HCT116 (cell line): ENCODE measurements at regions of chr17 and their contacts with region 1.

Region 1: DNA sequence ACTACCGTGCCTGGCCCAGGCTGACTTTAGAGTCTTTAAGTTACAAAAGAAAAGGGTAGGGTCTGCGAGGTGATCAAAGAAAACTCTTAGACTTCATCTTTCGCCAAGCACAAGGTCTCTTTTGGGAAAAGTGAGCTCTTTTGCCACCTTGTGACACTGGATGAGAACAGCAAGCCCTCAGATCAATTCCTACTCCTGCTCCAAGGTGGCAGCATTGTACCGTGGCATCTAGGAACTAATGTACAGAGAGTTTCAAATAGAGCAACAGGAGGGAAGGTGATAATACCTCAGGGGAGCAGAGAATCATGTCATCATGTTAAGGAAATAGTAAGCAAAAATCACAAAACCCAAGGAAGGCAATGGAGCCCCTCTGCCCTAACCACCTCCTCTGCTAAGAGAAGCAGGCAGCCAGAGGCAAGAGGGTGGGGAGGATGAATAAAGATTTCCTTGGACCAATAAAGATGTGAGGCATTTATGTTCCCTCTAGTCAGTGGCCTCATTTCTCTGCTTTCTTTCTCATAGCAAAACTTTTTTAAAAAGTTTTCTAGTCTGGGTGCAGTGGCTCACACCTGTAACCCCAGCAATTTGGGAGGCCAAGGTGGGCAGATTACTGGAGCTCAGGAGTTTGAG is 2.1 kb upstream of the C17orf78 start:
- DNase-seq: peak; percentile 76
- ATAC-seq: peak; percentile 98
- H3K4me3 ChIP-seq: no peak overlapping the region
- H3K27ac ChIP-seq: no peak overlapping the region
- H3K4me1 ChIP-seq: peaks cover 0 to 5% of the 10 kb centered on the region in 2 experiments; a peak in 2 of 4 replicates
- H3K27me3 ChIP-seq: no peaks in the 10 kb centered on the region
- CTCF ChIP-seq: peak; percentile 99 to 100 (median 100)
- POLR2A ChIP-seq: no peak
- RAD21 ChIP-seq: peak; percentile 99

Region 2: DNA sequence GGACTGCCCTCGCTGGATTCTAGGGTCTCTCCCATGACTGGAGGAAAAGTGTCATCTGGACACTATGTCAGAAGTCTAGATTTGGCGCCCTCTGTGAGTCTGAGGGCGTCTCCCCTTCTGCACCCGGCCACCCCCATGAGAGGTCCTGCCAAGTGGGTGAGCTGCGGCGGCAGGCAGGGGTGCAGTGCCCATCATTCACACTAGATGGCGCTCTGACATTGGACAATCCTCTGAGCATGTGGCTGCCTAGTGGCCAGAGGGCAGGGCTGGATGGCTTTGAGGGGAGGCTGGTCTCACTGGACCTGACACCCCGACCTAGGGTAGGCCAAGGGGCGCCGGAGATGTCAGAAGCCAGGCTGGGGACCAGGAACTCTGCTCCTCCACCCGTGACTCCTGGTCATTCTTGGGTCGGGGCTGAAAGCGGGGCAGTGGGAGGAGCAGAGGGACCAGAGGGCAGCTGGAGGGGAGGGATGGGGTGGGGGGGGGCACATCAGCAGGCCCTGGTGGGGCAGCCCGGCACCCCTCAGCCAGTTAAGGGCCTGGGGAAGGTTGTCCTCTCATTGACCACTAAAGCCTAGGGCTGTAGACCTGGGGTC is 744.3 kb before region 1 on chr17:
- CTCF ChIA-PET with region 1: interaction called, 13 read pairs
- POLR2A ChIA-PET with region 1: no interaction called
- RAD21 ChIA-PET with region 1: no interaction called
- intact Hi-C with region 1: loop called (anchors 1 kb)
- DNase-seq: peak; percentile 54
- ATAC-seq: peak; percentile 95
- H3K4me3 ChIP-seq: no peak overlapping the region
- H3K27ac ChIP-seq: no peak overlapping the region
- H3K4me1 ChIP-seq: peaks cover 0 to 4% of the 10 kb centered on the region in 2 experiments; a peak in 2 of 4 replicates
- H3K27me3 ChIP-seq: 0 out of 2 replicates have a peak, but pooled peaks cover 4% of the 10 kb centered on the region
- CTCF ChIP-seq: peak; percentile 92 to 98 (median 98)
- POLR2A ChIP-seq: no peak
- RAD21 ChIP-seq: peak; percentile 98

Region 3: DNA sequence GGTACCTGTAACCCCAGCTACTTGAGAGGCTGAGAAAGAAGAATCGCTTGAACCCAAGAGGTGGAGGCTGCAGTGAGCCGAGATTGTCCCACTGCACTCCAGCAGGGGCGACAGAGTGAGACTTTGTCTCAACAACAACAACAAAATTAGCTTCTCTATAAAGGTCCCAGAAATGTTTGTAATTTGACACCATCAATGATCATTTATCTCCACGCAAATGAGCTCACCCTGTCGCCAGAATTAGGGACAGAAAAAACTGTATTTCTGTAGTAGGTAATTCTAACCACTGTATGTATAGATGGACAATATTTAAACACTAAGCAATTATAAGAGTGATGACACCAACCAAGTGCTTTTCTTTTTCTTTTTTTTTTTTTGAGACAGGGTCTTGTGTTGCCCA is 12.8 kb after region 1 on chr17:
- CTCF ChIA-PET with region 1: interaction called, 12 read pairs
- POLR2A ChIA-PET with region 1: interaction called, 3 read pairs
- RAD21 ChIA-PET with region 1: no interaction called
- intact Hi-C with region 1: no loop called
- DNase-seq: no peak
- ATAC-seq: no peak
- H3K4me3 ChIP-seq: no peak overlapping the region
- H3K27ac ChIP-seq: no peak overlapping the region
- H3K4me1 ChIP-seq: no peaks in the 10 kb centered on the region; a peak in 1 of 4 replicates
- H3K27me3 ChIP-seq: no peaks in the 10 kb centered on the region
- CTCF ChIP-seq: no peak
- POLR2A ChIP-seq: no peak
- RAD21 ChIP-seq: no peak

Region 4: DNA sequence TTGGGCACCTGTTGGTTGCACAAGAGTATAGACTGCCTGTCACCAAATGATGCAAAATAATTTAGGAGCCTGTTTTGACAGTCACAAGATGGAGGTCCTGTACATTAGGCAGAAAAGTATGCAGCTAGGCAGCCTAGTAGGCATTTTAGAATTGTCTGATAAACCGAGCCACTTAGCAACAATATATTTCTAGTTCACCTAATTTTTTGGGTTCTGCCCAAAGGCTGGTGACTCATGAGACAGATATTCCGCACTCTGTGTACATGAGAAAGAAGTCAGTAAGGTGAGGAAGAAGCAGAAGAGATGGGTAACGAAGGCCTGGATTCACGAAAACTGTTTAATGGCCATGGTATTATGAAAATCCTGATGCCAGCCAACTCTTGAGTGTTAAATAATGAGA is 25.8 kb after region 1 on chr17:
- CTCF ChIA-PET with region 1: interaction called, 19 read pairs
- POLR2A ChIA-PET with region 1: interaction called, 3 read pairs
- RAD21 ChIA-PET with region 1: interaction called in 1 of 2 experiments, 3 read pairs
- intact Hi-C with region 1: loop called (anchors 1 kb)
- DNase-seq: no peak
- ATAC-seq: 0 out of 2 replicates have a peak, but pooled peaks have one; percentile 35
- H3K4me3 ChIP-seq: no peak overlapping the region
- H3K27ac ChIP-seq: no peak overlapping the region
- H3K4me1 ChIP-seq: peaks cover 6 to 18% of the 10 kb centered on the region in 2 experiments
- H3K27me3 ChIP-seq: no peaks in the 10 kb centered on the region
- CTCF ChIP-seq: no peak
- POLR2A ChIP-seq: no peak
- RAD21 ChIP-seq: no peak

Region 5: DNA sequence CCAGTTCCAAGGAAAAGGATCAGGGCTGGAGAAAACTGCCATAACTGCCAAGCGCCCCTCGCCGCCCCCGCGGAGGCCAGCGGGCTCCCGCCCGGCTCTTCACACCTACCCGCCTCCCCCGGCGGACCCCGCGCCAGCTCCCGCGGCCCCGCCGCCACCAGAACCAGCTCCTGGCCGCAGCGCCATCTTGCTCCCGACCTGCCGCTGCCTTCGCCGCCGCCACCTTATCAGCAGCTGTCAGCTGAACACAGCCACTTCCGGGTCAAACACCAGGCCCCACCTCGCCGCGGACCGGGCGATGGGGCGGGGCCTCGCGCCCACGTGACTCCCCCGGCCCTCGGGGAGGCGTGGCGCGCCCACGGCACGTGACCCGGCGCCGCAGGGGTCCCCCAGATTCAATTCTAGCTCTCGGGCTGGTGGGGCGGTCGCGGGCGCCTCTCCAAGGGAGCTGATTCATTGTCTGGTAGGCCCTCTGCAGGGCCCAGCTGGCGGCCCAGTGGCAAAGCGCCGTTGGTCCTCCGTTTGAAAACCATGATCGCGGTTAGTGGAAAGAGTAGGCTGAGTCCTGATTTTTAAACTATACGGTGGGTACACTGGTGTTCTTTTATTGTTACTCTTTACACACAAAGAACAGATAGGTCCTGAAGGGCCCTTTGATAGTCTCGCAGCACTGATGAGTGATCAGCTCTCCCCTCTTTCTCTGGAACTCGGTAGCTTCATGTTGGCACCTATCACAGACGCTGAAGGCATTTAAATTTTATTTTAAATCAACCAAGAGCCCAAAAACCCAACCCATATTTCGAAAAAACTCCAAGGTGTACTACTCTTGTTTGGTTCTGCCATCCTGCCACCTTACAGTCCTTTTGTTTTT is 235.8 kb after region 1 on chr17 and contains the start of gene SYNRG:
- CTCF ChIA-PET with region 1: interaction called, 10 read pairs
- POLR2A ChIA-PET with region 1: no interaction called
- RAD21 ChIA-PET with region 1: interaction called in 1 of 2 experiments, 3 read pairs
- intact Hi-C with region 1: no loop called
- DNase-seq: peak; percentile 86
- ATAC-seq: peak; percentile 92
- H3K4me3 ChIP-seq: peak within 1 kb of the TSS; percentile 85 to 91
- H3K27ac ChIP-seq: peak within 1 kb of the TSS; percentile 75
- H3K4me1 ChIP-seq: peaks cover 15 to 26% of the 10 kb centered on the region in 2 experiments
- H3K27me3 ChIP-seq: no peaks in the 10 kb centered on the region
- CTCF ChIP-seq: peak in 2 of 3 experiments; percentile 23 to 29; a peak in 2 of 6 replicates
- POLR2A ChIP-seq: peak; percentile 80
- RAD21 ChIP-seq: peak; percentile 34
- total RNA-seq, gene SYNRG: 23.8 TPM

Region 6: GRCh38 chr17:37659925-37660324 is 286.3 kb after region 1 on chr17:
- CTCF ChIA-PET with region 1: no interaction called
- POLR2A ChIA-PET with region 1: no interaction called
- RAD21 ChIA-PET with region 1: no interaction called
- intact Hi-C with region 1: no loop called
- DNase-seq: no peak
- ATAC-seq: no peak
- H3K4me3 ChIP-seq: no peak overlapping the region
- H3K27ac ChIP-seq: no peak overlapping the region
- H3K4me1 ChIP-seq: no peaks in the 10 kb centered on the region
- H3K27me3 ChIP-seq: no peaks in the 10 kb centered on the region
- CTCF ChIP-seq: no peak
- POLR2A ChIP-seq: no peak
- RAD21 ChIP-seq: no peak

Region 7: DNA sequence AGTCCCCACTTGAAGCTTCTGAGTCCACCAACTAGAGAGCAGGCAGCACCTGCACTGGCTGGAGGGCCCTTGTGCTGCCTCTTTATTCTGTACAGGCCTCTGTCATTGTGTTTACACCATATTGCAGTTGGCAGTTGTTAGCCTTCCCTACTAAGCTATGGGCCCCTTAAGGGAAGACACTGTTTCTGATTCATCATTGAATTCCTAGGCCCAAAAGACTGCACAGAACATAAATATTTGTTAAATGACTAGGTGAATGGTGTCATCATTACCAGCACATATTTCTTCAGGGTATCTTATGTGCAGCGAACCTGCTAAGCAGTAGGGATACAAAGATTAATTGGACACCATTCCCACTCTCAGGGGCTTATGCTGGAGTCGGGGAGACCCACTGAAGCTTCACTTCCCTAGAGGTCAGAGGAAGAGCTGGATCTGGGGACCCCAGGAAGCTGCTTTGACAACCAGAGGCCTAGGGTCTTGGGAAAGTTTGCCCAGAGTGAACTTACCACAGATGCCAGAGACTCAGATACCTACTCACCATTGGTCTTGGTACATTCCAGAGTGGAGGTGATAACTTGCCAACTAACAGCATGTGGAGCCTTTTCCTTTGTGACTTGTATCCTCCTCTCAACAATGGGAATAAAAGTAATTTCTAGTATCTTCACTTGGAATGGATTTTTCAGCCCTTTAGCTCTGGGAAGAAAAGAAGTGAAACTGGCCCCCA is 298.3 kb after region 1 on chr17:
- CTCF ChIA-PET with region 1: no interaction called
- POLR2A ChIA-PET with region 1: no interaction called
- RAD21 ChIA-PET with region 1: no interaction called
- intact Hi-C with region 1: no loop called
- DNase-seq: no peak
- ATAC-seq: peak; percentile 49; the same call in 1 of the 2 replicates
- H3K4me3 ChIP-seq: no peak overlapping the region
- H3K27ac ChIP-seq: no peak overlapping the region
- H3K4me1 ChIP-seq: peaks cover 0 to 10% of the 10 kb centered on the region in 2 experiments; a peak in 2 of 4 replicates
- H3K27me3 ChIP-seq: no peaks in the 10 kb centered on the region
- CTCF ChIP-seq: no peak
- POLR2A ChIP-seq: no peak
- RAD21 ChIP-seq: no peak